Endothelial cell of umbilical vein (primary cell): ENCODE measurements at regions of chr2 and their contacts with region 1.

Region 1: GRCh38 chr2:46062637-46063412 is 234.4 kb upstream of the EPAS1 start:
- DNase-seq: peak; percentile 91
- H3K4me3 ChIP-seq: no peak overlapping the region
- H3K27ac ChIP-seq: peak overlapping the region; percentile 10
- H3K4me1 ChIP-seq: peaks cover 38% of the 10 kb centered on the region
- H3K27me3 ChIP-seq: no peaks in the 10 kb centered on the region
- CTCF ChIP-seq: peak; percentile 83 to 93
- POLR2A ChIP-seq: no peak

Region 2: DNA sequence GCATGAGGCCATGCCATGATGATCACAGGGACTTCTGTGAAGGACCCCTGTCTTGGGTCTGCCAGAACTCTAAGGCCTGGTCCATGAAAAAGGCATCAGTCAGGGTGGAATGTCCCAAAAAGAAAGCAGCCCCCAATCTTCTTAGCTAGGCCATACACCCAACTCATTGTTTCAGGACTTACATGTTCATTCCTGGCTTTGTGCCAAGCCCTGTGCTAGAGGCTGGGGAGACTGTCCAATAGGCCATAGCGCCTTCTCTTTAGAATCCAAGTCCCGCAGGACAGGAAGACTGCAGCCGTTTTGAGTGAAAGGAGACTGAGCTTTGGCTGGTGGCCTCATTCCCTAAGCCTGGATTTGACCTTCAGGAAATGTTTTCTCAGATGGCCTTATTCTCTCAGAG is 164.0 kb before region 1 on chr2:
- CTCF ChIA-PET with region 1: no interaction called
- POLR2A ChIA-PET with region 1: no interaction called
- dilution Hi-C with region 1: no loop called
- intact Hi-C with region 1: no loop called
- DNase-seq: peak; percentile 28
- H3K4me3 ChIP-seq: no peak overlapping the region
- H3K27ac ChIP-seq: no peak overlapping the region
- H3K4me1 ChIP-seq: no peaks in the 10 kb centered on the region
- H3K27me3 ChIP-seq: no peaks in the 10 kb centered on the region
- CTCF ChIP-seq: no peak
- POLR2A ChIP-seq: no peak

Region 3: DNA sequence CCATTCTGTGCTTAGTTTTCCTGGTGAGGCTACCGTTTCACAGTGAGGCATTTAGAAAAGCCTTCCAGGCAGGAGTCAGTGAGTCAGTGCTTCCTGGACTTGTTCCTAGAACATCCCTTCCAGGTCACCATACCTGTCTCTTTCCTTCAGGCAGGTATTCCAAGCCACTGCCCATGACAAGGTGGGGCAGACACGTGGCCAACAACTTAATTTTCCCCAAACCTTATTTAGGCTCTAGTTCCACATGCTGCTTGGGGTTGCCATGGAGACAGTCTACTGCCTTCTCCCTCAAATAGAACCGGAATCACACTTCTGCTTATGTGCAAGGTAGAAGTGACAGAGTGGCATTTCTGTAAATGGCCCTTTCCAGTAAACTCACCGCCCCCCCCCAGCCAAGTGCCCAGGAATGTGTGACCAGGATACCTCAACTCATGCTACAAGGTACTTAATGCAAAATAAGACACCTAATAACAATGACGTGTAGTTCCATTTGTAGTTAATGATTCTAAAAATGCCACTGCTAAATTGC is 153.1 kb before region 1 on chr2:
- CTCF ChIA-PET with region 1: no interaction called
- POLR2A ChIA-PET with region 1: no interaction called
- dilution Hi-C with region 1: no loop called
- intact Hi-C with region 1: no loop called
- DNase-seq: no peak
- H3K4me3 ChIP-seq: no peak overlapping the region
- H3K27ac ChIP-seq: no peak overlapping the region
- H3K4me1 ChIP-seq: no peaks in the 10 kb centered on the region
- H3K27me3 ChIP-seq: no peaks in the 10 kb centered on the region
- CTCF ChIP-seq: no peak
- POLR2A ChIP-seq: no peak

Region 4: DNA sequence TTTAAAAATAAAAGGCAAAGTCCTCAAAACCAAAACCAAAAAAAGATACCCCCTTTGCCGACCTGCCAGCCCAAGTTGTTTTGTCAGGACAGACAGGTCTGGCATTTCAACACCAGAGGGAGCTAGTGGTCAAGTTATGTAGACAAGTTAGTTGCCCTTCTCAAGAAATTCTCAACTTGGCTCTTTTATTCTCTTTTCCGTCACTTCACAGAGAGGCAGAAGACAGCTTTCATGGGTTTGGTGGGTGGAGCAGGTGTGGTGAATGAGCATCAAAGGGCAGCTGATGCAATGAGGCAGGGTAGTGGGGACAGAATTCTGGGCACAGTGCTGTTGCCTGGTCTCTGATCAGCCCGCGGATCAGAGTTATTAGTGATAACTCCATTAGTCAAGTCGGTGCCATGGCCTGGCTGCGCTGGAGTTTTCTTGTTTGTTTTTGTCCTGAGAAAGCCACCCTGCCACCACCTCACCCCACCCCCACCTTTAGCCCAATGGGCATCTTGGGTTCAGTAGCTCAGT is 69.3 kb before region 1 on chr2:
- CTCF ChIA-PET with region 1: interaction called, 11 read pairs
- POLR2A ChIA-PET with region 1: no interaction called
- dilution Hi-C with region 1: no loop called
- intact Hi-C with region 1: no loop called
- DNase-seq: peak; percentile 75
- H3K4me3 ChIP-seq: no peak overlapping the region
- H3K27ac ChIP-seq: no peak overlapping the region
- H3K4me1 ChIP-seq: no peaks in the 10 kb centered on the region
- H3K27me3 ChIP-seq: no peaks in the 10 kb centered on the region
- CTCF ChIP-seq: peak; percentile 72 to 74
- POLR2A ChIP-seq: no peak

Region 5: GRCh38 chr2:46050489-46050888 is 12.3 kb before region 1 on chr2:
- CTCF ChIA-PET with region 1: interaction called, 10 read pairs
- POLR2A ChIA-PET with region 1: no interaction called
- dilution Hi-C with region 1: no loop called
- intact Hi-C with region 1: no loop called
- DNase-seq: no peak
- H3K4me3 ChIP-seq: no peak overlapping the region
- H3K27ac ChIP-seq: no peak overlapping the region
- H3K4me1 ChIP-seq: peaks cover 14% of the 10 kb centered on the region
- H3K27me3 ChIP-seq: no peaks in the 10 kb centered on the region
- CTCF ChIP-seq: no peak
- POLR2A ChIP-seq: no peak

Region 6: DNA sequence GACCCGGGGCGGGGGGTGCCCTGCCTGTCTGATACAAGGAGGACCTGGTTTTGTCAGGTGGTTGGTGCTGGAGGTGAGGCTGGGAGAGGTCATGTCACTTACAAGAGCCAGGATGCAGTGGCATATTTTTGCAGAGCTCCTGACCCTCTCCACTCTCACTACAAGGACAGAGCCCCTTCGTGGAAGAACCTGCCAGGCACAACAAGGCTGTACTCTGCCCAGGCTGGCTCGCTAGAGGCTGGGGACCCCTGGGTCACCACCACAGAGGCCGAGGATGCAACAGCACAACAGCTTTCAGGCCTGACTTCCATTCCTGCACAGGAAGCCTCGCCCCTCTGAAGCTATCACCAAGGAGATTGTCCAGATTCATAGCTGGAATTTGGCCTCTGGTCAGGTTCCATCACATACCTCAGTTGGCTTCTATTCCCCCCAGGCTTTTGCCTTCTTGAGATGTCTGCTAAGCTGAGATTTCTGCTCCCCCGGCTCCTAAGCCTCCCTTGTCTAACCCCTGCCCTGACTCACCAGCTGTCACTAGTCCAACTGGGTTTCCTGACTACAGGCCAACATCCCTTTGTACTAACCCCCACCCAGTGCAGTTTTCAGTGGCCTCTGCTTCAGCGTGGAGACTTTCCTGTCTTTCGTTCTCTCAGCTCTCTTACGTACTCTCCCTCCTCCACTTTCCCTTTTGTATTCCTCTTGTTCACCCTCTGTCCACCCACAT is 101.9 kb after region 1 on chr2:
- CTCF ChIA-PET with region 1: interaction called, 18 read pairs
- POLR2A ChIA-PET with region 1: no interaction called
- dilution Hi-C with region 1: no loop called
- intact Hi-C with region 1: no loop called
- DNase-seq: peak; percentile 94
- H3K4me3 ChIP-seq: no peak overlapping the region
- H3K27ac ChIP-seq: peak overlapping the region; percentile 21
- H3K4me1 ChIP-seq: peaks cover 18% of the 10 kb centered on the region
- H3K27me3 ChIP-seq: no peaks in the 10 kb centered on the region
- CTCF ChIP-seq: no peak
- POLR2A ChIP-seq: peak; percentile 57

Region 7: DNA sequence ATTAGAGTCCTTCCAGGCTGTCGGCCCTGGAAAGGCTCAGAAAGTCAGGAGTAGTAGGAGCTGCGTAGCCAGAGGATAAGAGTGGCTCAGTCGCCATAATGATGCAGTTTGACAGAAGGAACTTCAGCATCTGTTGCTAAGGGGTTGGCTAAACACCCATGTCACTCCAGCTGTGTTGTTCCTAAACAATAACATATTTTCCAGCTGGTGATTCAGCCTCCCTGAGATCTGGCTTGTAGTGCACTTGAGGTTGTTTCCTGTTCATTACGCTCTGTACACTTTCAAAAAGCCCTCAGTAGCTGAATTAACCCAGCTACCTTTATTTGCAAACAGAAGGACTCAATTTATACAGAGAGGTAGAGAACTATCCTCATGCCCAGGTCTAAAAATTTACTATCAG is 194.7 kb after region 1 on chr2:
- CTCF ChIA-PET with region 1: interaction called, 11 read pairs
- POLR2A ChIA-PET with region 1: no interaction called
- dilution Hi-C with region 1: no loop called
- intact Hi-C with region 1: no loop called
- DNase-seq: peak; percentile 95
- H3K4me3 ChIP-seq: no peak overlapping the region
- H3K27ac ChIP-seq: peak overlapping the region; percentile 64
- H3K4me1 ChIP-seq: peaks cover 41% of the 10 kb centered on the region
- H3K27me3 ChIP-seq: no peaks in the 10 kb centered on the region
- CTCF ChIP-seq: no peak
- POLR2A ChIP-seq: no peak

Region 8: DNA sequence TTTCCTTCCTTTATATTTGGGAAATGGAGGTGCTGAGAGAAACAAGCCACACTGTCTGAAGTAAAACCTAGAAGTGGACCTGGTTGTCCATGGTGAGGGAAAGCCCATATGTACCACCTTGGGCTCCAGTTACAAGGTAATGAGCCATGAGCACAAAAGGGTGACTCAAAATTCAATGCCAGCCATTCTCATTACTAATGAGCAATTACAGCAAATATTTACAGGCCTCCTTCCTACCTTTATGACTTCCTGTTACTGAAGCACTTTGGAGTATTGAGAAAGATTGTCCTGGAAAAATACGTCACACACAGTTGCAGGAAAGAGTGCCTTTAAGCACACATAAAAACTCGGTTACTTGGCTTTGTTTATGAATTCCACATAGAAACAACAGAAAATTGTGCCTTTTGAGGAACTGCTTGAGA is 243.5 kb after region 1 on chr2:
- CTCF ChIA-PET with region 1: interaction called, 13 read pairs
- POLR2A ChIA-PET with region 1: no interaction called
- dilution Hi-C with region 1: no loop called
- intact Hi-C with region 1: no loop called
- DNase-seq: peak; percentile 60
- H3K4me3 ChIP-seq: no peak overlapping the region
- H3K27ac ChIP-seq: peak overlapping the region; percentile 29
- H3K4me1 ChIP-seq: peaks cover 77% of the 10 kb centered on the region
- H3K27me3 ChIP-seq: no peaks in the 10 kb centered on the region
- CTCF ChIP-seq: no peak
- POLR2A ChIP-seq: no peak